Cardiac septum (tissue), 1 donor: ENCODE measurements at regions of chr11 and their contacts with region 1.

Region 1: GRCh38 chr11:1832211-1832919 is 2.4 kb upstream of the SYT8 start:
- DNase-seq: no peak

Region 2: DNA sequence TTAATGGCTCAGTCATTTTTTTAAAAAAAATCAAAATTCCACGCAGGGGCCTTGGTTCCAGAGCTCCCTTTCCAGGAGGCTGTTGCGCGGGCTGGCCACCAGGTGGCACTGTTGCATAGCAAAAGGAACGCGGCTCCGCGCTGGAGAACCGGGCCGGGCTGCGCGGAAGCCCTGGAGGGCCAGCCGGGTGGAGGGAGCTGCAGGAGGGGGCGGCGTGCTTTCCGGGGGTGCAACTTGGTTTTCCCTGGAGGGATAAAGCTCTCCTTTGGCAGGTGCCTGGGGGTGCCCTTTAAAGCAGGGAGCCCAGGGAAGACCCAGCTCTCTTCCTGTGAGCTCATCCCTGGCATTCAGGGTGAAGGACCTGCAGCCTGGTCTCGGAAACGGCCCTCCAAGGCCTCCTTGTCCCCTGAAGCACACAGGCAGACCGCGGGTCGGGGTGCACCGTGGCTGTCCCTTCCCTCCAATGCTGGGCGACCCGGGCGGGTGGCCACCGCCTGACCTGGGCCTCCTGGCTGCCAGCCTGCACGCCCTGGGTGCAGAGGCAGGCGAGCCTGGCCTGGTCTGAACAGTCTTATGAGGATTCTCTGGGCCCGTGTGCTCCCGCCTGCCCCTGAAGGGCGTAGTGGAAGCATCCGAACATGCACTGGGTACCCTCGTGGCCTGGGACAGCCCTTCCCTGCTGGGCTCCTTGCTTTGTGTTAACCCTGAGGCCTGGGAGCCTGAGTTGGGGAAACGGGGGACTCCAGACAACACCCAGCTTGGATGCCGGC is 179.4 kb before region 1 on chr11:
- intact Hi-C with region 1: loop called (anchors 2 kb)
- DNase-seq: peak; percentile 88

Region 3: DNA sequence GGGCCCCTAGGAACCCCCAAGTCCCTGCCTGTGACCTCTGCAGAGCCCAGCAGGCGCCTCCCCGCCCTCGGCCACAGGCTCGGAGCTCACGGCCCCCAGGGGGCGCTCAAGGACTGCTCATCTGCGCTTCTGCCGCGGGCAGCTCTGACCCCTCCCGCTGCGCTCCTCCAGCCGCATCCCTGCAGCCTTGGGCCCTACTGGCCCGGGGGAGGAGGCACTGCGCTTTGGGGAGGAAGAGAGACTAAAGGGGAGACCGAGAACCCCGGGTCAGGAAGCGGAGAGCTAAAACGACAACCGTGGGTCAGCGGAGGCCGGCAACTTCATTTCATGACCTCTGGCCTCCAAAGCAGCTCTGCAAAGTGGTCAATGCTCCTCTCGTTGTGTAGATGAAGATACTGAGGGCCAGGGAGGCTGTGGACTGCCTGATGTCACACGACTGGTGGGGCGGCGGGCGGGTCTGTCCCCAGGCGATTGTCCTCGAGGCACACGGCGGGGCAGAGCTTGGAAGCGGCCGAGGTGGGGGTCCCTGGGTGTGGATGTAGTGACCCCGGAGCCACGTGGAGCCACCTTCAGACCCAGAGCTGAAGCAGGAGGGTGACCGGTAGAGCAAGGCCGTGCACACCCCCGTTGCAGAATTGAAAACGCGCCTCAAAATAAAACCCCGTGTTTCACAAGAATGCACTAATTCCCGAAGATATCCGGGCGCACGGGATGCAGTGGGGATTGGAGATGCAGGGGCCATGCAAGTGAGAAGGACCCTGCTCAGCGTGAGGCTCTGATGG is 138.1 kb before region 1 on chr11:
- intact Hi-C with region 1: loop called (anchors 1 kb)
- DNase-seq: peak; percentile 94